ENCODE measurements at regions of chr2 and their contacts with region 1.

Region 1: GRCh38 chr2:20962939-20963557 is 80.8 kb downstream of the APOB start:
- DNase-seq: peak; percentile 41
- ATAC-seq: peak; percentile 90
- H3K4me3 ChIP-seq: no peak overlapping the region
- H3K27ac ChIP-seq: no peak overlapping the region
- H3K4me1 ChIP-seq: no peaks in the 10 kb centered on the region
- H3K27me3 ChIP-seq: peaks cover 61% of the 10 kb centered on the region
- CTCF ChIP-seq: peak; percentile 70 to 91 (median 86); a peak in 5 of 6 replicates
- POLR2A ChIP-seq: no peak
- RAD21 ChIP-seq: peak; percentile 80

Region 2: DNA sequence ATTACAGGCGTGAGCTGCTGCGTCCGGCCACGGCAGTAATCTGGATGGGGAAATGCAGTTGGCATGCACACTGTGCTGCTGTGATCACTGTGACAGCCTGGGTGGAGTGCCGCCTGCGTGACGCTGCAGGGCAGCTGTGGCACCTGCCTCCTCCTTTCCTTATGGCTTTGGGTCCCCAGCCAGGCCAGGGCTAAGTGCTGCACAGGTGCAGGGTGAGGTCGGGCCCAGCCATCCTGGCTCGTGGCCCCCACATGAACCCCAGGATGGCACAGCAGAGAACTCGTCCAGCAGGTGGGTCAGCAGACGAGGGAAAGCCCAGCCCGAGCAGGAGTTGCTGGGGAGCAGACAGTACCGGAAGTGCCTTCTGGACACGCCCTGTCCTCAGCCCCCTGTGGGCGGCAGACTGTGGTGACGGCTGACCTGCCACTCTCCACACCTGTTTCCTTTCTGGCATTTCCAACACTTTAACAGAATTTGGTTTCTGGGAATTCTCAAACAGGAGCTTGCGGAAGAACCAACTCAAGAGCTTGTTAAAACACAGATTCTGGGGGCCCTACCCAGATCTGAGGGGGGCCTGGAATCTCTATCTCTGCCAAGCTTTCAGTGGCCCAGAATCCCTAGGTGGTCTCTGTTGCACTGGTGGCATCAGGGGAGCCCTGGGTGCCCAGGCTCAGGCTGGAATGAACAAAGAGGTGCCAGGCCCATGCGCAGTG is 329.1 kb before region 1 on chr2:
- CTCF ChIA-PET with region 1: no interaction called
- POLR2A ChIA-PET with region 1: no interaction called
- RAD21 ChIA-PET with region 1: no interaction called
- intact Hi-C with region 1: no loop called
- DNase-seq: no peak
- ATAC-seq: no peak
- H3K4me3 ChIP-seq: no peak overlapping the region
- H3K27ac ChIP-seq: no peak overlapping the region
- H3K4me1 ChIP-seq: peaks cover 9 to 18% of the 10 kb centered on the region in 2 experiments; a peak in 3 of 4 replicates
- H3K27me3 ChIP-seq: no peaks in the 10 kb centered on the region
- CTCF ChIP-seq: no peak
- POLR2A ChIP-seq: no peak
- RAD21 ChIP-seq: no peak

Region 3: GRCh38 chr2:20682167-20682920 is 280.7 kb before region 1 on chr2:
- CTCF ChIA-PET with region 1: interaction called, 3 read pairs
- POLR2A ChIA-PET with region 1: no interaction called
- RAD21 ChIA-PET with region 1: no interaction called
- intact Hi-C with region 1: loop called (anchors 1 kb)
- DNase-seq: no peak
- ATAC-seq: peak; percentile 57
- H3K4me3 ChIP-seq: no peak overlapping the region
- H3K27ac ChIP-seq: no peak overlapping the region
- H3K4me1 ChIP-seq: no peaks in the 10 kb centered on the region
- H3K27me3 ChIP-seq: no peaks in the 10 kb centered on the region
- CTCF ChIP-seq: peak; percentile 31 to 61 (median 59); a peak in 5 of 6 replicates
- POLR2A ChIP-seq: no peak
- RAD21 ChIP-seq: peak; percentile 54

Region 4: DNA sequence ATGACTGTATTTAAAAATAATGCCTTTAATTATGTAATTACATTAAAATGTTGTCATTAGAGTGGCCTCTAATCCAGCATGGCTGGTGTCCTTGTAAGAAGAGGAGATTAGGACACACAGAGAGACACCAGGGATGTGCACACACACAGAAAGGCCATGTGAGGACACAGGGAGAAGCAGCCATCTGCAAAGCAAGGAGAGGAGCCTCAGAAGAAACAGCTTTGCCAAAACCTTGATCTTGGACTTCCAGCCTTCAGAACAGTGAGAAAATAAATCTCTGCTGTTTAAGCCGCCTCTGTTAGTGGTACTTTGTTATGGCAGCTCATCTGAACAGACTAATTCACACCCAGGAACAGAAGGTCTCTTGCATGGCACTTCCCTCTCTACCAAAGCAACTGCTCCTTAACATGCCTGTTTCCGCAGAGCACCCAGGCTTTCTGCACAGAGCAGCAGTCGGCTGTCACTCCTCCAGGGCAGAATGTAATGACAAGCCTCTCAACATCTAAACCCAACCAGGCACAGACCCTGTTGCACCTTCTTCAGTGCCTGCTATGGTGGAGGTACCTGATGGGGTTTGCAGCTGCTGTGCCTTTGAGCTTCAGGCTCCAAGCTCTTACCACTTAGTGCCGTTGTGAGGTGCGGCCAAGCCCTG is 538.5 kb after region 1 on chr2:
- CTCF ChIA-PET with region 1: no interaction called
- POLR2A ChIA-PET with region 1: no interaction called
- RAD21 ChIA-PET with region 1: no interaction called
- intact Hi-C with region 1: no loop called
- DNase-seq: no peak
- ATAC-seq: no peak
- H3K4me3 ChIP-seq: no peak overlapping the region
- H3K27ac ChIP-seq: no peak overlapping the region
- H3K4me1 ChIP-seq: no peaks in the 10 kb centered on the region
- H3K27me3 ChIP-seq: no peaks in the 10 kb centered on the region
- CTCF ChIP-seq: no peak
- POLR2A ChIP-seq: no peak
- RAD21 ChIP-seq: no peak

Measured in HCT116 (cell line).